ENCODE measurements at regions of chr12 and their contacts with region 1.

Region 1: GRCh38 chr12:20030826-20031225 is 337.5 kb upstream of the PDE3A start:
- DNase-seq: peak; percentile 96
- H3K4me3 ChIP-seq: no peak overlapping the region
- H3K27ac ChIP-seq: peak overlapping the region; percentile 91
- H3K4me1 ChIP-seq: peaks cover 31% of the 10 kb centered on the region
- H3K27me3 ChIP-seq: no peaks in the 10 kb centered on the region
- CTCF ChIP-seq: no peak
- POLR2A ChIP-seq: peak; percentile 56

Region 2: GRCh38 chr12:19959353-19959752 is 71.5 kb before region 1 on chr12:
- CTCF ChIA-PET with region 1: no interaction called
- POLR2A ChIA-PET with region 1: no interaction called
- dilution Hi-C with region 1: no loop called
- intact Hi-C with region 1: loop called (anchors 1 kb)
- DNase-seq: peak; percentile 79
- H3K4me3 ChIP-seq: peak overlapping the region in 1 of 3 experiments; percentile 43
- H3K27ac ChIP-seq: peak overlapping the region; percentile 86
- H3K4me1 ChIP-seq: peaks cover 49% of the 10 kb centered on the region
- H3K27me3 ChIP-seq: no peaks in the 10 kb centered on the region
- CTCF ChIP-seq: no peak
- POLR2A ChIP-seq: no peak

Region 3: DNA sequence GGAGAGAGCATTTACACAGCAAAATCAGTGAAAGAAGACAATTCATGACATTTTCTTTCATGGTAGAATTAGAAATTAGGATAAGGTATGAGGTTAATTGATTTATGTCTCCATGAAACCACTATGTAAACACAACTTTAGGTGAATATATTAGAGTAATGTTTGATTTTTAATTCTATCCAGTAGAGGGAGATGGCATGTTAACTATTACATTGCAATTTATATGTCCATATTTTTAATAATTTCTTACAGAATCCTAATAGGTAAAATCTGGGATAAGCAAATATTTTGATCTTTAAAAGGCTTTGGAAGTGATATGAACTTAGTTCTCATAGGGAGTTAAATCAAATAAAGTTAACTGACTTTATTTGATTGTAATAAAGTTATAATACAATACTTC is 35.9 kb before region 1 on chr12:
- CTCF ChIA-PET with region 1: no interaction called
- POLR2A ChIA-PET with region 1: no interaction called
- dilution Hi-C with region 1: no loop called
- intact Hi-C with region 1: loop called (anchors 2 kb)
- DNase-seq: peak; percentile 63
- H3K4me3 ChIP-seq: no peak overlapping the region
- H3K27ac ChIP-seq: no peak overlapping the region
- H3K4me1 ChIP-seq: peaks cover 20% of the 10 kb centered on the region
- H3K27me3 ChIP-seq: no peaks in the 10 kb centered on the region
- CTCF ChIP-seq: peak in 1 of 2 donors; percentile 10
- POLR2A ChIP-seq: no peak

Region 4: GRCh38 chr12:20154060-20154459 is 123.2 kb after region 1 on chr12:
- CTCF ChIA-PET with region 1: no interaction called
- POLR2A ChIA-PET with region 1: no interaction called
- dilution Hi-C with region 1: no loop called
- intact Hi-C with region 1: loop called (anchors 2 kb)
- DNase-seq: no peak
- H3K4me3 ChIP-seq: no peak overlapping the region
- H3K27ac ChIP-seq: no peak overlapping the region
- H3K4me1 ChIP-seq: peaks cover 8% of the 10 kb centered on the region
- H3K27me3 ChIP-seq: no peaks in the 10 kb centered on the region
- CTCF ChIP-seq: no peak
- POLR2A ChIP-seq: no peak

Measured in endothelial cell of umbilical vein (primary cell).